Dendritic cell treated with granulocyte-macrophage colony-stimulating factor and Interleukin-4, amounts not matched to agents 40 ng/mL and 50 ng/mL, for 4 days (primary cell): ENCODE measurements at regions of chr12 and their contacts with region 1.

Region 1: GRCh38 chr12:7108796-7109571 is at the start of gene C1RL:
- H3K4me3 Mint-ChIP-seq: peak within 1 kb of the TSS; percentile 79
- H3K27ac Mint-ChIP-seq: peak within 1 kb of the TSS; percentile 83
- H3K4me1 Mint-ChIP-seq: peaks cover 34% of the 10 kb centered on the region
- H3K27me3 Mint-ChIP-seq: peaks cover under 1% of the 10 kb centered on the region

Region 2: DNA sequence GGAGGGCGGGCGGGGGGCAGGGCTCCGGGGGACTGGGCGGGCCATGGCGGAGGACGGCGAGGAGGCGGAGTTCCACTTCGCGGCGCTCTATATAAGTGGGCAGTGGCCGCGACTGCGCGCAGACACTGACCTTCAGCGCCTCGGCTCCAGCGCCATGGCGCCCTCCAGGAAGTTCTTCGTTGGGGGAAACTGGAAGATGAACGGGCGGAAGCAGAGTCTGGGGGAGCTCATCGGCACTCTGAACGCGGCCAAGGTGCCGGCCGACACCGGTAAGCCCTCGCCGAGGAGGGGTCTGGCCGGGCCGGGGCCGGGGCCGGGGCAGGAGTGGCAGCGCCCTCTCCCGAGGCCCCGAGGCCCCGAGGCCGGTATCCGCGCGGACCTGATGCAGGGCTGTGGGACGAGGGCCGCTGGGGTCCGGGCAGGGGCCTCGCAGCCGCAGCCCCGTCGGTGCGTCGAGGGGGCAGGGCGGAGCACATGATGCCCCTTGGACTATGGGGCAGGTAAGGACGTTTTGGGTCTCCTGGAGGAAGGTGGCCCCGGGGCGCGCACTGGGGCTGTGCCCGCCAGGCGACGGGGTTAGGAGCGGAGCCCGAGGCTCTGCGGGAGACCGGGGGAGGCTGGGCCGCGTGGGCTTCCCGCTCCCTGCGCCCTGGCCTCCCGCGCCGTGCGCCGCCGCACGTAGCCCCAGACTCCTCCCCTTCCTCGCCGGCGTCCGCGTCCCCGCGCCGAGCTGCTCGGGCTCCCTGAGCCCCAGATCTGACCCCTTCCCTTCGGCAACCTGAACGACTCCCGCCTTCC is 241.4 kb before region 1 on chr12 and contains the start of gene TPI1:
- intact Hi-C with region 1: loop called (anchors 2 kb)
- H3K4me3 Mint-ChIP-seq: peak within 1 kb of the TSS; percentile 94
- H3K27ac Mint-ChIP-seq: peak within 1 kb of the TSS; percentile 94
- H3K4me1 Mint-ChIP-seq: peaks cover 57% of the 10 kb centered on the region
- H3K27me3 Mint-ChIP-seq: no peaks in the 10 kb centered on the region

Region 3: DNA sequence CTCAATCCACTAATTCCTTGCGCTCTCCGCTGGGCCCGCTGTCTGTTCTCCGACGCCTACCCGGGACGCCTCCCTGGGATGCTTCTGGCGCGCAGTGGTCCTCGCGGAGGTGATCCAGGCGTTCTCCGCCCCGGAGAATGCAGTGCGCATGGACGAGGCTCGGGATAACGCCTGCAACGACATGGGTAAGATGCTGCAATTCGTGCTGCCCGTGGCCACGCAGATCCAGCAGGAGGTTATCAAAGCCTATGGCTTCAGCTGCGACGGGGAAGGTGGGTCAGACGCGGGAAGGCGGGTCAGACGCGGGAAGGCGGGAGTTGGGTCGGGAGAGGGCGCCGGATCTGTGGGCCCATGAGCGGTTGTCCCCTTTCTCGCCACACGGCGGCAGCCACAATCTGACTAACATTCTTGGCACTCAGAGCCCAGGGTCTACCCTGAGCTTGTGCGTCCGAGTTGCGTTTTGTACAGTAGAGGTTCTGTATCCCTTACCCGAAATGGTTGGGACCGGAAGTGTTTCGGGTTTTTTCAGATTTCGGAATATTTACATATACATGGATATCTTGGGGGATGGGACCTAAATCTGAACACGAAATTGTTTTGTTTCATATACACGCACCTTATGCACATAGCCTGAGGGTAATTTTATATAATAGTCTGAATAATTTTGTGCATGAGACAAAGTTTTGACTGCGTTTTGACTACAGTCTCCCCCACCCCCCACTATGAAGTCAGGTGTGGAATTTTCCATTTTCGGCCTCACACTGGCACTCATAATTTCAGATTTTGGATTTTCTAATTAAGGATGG is 164.4 kb before region 1 on chr12:
- intact Hi-C with region 1: loop called (anchors 5 kb)
- H3K4me3 Mint-ChIP-seq: peak overlapping the region; percentile 70
- H3K27ac Mint-ChIP-seq: peak overlapping the region; percentile 99
- H3K4me1 Mint-ChIP-seq: peaks cover 73% of the 10 kb centered on the region
- H3K27me3 Mint-ChIP-seq: no peaks in the 10 kb centered on the region

Region 4: GRCh38 chr12:7060353-7060954 is 48.5 kb before region 1 on chr12 and contains the start of gene C1S:
- intact Hi-C with region 1: loop called (anchors 5 kb)
- H3K4me3 Mint-ChIP-seq: no peak within 1 kb of the TSS
- H3K27ac Mint-ChIP-seq: peak within 1 kb of the TSS; percentile 55
- H3K4me1 Mint-ChIP-seq: peaks cover 47% of the 10 kb centered on the region
- H3K27me3 Mint-ChIP-seq: peaks cover 24% of the 10 kb centered on the region